Dendritic cell treated with granulocyte-macrophage colony-stimulating factor and Interleukin-4, amounts not matched to agents 40 ng/mL and 50 ng/mL, for 4 days (primary cell): ENCODE measurements at regions of chr20 and their contacts with region 1.

Region 1: GRCh38 chr20:49100972-49101371 is 54.9 kb downstream of the CSE1L start:
- H3K4me3 Mint-ChIP-seq: no peak overlapping the region
- H3K27ac Mint-ChIP-seq: peak overlapping the region; percentile 75
- H3K4me1 Mint-ChIP-seq: peaks cover 9% of the 10 kb centered on the region
- H3K27me3 Mint-ChIP-seq: no peaks in the 10 kb centered on the region

Region 2: DNA sequence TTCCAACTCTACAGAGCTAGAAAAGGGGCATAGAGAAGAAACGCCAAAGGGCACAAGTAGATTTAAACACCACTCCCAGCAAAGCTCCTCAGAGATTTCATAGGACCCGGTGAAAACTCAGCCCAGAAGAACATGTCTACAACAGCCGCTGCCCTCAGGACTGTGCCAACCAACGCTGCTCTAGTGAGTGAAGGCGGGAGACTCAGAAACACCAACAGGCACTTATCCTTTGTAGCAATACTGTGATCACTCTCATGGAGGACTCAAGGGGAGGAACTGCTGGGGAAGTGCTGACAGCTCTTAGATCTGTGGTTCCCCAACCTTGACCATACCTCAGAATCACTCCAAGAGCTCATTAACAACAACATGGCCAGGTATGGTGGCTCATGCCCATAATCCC is 47.6 kb after region 1 on chr20:
- intact Hi-C with region 1: no loop called
- H3K4me3 Mint-ChIP-seq: no peak overlapping the region
- H3K27ac Mint-ChIP-seq: no peak overlapping the region
- H3K4me1 Mint-ChIP-seq: no peaks in the 10 kb centered on the region
- H3K27me3 Mint-ChIP-seq: no peaks in the 10 kb centered on the region

Region 3: DNA sequence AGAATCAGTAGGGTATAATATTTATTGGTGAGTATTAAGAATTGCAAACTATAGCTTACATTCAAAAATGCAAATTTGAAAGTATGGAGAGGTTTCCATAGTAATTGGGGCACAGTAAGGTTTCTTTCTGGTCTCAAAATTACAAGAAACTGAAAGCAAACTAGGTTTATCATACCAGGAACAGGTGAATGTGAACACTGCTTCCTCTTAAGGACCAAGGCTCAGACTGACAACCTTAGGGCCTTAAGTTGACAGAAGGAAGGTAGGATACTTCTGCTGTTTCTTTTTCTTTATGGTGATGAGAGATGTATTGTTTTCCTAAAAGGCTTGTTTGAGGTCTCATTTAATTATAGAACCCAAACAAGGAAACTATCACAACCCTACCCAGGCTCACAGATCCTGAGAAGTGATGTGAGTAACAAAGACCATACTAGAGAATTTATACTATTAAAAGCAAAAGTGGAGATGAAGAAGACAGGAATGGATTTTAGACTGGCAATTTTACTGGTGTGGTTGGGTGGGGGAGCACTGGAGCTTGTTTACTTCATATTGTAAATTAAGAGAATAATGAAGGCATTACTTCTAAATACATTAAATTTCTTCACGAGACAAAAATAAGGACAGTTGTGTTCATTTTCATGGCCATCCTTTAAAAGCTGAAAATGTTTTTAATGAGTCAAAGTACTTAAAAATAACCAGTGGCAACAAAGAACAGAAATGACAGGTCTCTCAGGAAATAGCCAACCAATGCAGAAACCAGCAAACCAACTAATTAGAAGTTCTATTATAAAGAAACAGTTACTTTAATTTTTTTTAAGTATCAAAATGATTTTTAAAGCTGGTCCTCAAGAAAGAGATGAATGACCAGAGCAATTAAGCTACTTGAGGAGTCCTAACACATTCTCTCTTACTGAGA is 65.8 kb after region 1 on chr20:
- intact Hi-C with region 1: loop called (anchors 10 kb)
- H3K4me3 Mint-ChIP-seq: no peak overlapping the region
- H3K27ac Mint-ChIP-seq: no peak overlapping the region
- H3K4me1 Mint-ChIP-seq: peaks cover 11% of the 10 kb centered on the region
- H3K27me3 Mint-ChIP-seq: no peaks in the 10 kb centered on the region